ENCODE measurements at regions of chr1 and their contacts with region 1.

Region 1: GRCh38 chr1:76035053-76035452 is 39.5 kb upstream of the ST6GALNAC3 start:
- DNase-seq: no peak
- ATAC-seq: no peak

Region 2: GRCh38 chr1:76154206-76154956 is 119.3 kb after region 1 on chr1:
- intact Hi-C with region 1: loop called in 1 of 2 experiments (anchors 10 kb)
- DNase-seq: peak; percentile 76
- ATAC-seq: peak; percentile 90 to 94

Region 3: DNA sequence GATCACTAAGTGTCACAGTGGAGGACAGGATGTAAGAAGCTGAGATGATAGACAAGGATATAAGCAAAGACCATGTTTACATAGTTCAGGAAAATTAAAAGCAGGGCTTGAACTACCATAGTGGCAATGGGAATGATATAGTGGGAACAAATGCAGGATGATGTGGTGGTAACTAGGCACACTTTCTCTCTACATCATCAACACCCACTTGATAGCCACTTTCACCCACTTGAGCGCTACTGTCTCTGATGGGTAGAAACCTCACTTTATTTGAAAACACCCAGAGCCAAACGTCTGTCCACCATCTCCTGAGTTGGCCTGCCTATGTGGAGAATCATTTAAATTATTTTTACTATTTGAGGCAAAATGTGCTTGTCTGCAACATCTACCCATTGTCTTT is 527.2 kb after region 1 on chr1:
- intact Hi-C with region 1: no loop called
- DNase-seq: no peak
- ATAC-seq: peak in 1 of 2 donors; percentile 44